Endothelial cell of umbilical vein (primary cell): ENCODE measurements at regions of chr6 and their contacts with region 1.

Region 1: DNA sequence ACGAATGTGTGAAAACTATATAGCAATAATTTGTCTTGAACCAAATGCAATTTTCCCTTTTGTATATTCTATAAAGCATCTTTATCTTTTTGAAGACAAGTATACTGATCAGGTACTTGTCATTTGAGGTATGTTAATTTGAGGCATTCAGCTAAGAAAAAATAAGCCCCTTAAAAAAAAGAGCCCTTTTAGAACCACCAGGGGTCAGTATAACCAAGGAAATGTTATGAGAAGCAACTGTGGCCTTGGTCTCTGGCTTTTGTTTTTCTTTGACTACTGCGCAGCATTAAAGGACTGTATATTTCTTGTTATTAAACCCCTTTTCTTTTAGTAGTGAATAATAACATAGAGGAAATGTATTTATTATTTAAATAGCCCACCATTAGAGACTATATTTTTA is 43.1 kb downstream of the CD109 start:
- DNase-seq: peak; percentile 79
- H3K4me3 ChIP-seq: no peak overlapping the region
- H3K27ac ChIP-seq: no peak overlapping the region
- H3K4me1 ChIP-seq: no peaks in the 10 kb centered on the region
- H3K27me3 ChIP-seq: no peaks in the 10 kb centered on the region
- CTCF ChIP-seq: peak; percentile 43 to 56
- POLR2A ChIP-seq: no peak

Region 2: DNA sequence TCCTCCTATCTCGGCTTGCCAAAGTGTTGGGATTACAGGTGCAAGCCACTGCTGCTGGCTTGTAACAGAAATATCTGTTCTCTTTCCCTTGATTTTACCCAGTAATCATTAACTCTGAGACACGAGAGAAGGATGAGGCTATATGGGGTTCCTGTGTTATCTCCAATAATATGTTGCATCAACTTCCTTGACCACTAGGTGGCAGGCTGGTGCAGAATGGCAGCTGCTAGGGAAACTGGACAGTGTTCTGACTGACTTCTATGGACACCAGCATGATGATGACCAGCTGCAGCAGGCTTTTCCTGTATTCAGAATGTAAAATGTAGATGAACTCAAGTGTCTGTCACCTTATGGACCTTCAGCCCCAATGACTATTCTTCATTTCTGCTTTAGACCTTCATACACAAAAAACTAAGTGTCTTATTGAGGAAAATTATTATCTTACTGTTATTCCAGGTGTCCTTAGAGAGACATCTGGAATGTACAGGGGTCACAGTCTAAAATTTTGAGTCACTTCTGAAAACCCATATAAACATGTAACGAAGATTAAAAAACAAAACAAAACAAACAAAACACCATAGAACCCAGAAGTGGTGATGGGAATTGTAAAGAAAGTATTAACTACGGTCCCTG is 63.5 kb before region 1 on chr6:
- CTCF ChIA-PET with region 1: interaction called, 343 read pairs
- POLR2A ChIA-PET with region 1: interaction called, 4 read pairs
- dilution Hi-C with region 1: no loop called
- intact Hi-C with region 1: no loop called
- DNase-seq: peak; percentile 85
- H3K4me3 ChIP-seq: no peak overlapping the region
- H3K27ac ChIP-seq: no peak overlapping the region
- H3K4me1 ChIP-seq: peaks cover 3% of the 10 kb centered on the region
- H3K27me3 ChIP-seq: no peaks in the 10 kb centered on the region
- CTCF ChIP-seq: peak; percentile 82 to 84
- POLR2A ChIP-seq: no peak

Region 3: DNA sequence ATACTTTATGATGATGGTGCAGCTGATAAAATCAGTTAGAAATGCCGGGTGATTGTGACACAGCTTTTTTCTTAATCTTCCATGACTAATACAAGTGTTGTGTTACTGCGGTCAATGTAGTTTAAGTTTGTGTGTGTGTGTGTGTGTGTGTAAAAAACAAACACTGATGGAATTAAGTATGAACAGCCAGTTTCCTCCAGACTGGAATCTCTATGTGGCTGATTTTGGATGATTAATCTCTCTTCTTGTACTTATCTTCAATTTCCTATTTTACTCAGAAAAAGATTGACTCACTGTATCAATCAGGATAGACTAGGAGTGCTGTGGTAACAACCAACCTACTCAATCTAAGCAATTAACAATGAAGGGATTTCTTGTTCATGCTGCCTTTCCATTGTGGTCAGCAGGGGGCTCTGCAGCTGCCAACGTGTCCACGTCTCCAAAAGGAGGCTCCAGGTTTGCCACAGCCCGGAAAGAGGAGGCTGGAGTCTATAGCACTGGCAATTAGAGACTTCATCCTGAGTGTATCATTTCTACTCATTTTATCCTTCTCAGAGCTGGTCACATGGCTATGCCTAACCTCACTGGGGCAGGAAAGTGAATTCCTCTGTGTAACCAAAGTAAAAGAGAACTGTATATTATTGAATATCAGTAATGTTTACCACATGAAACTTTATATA is 64.6 kb after region 1 on chr6:
- CTCF ChIA-PET with region 1: interaction called, 3 read pairs
- POLR2A ChIA-PET with region 1: no interaction called
- dilution Hi-C with region 1: no loop called
- intact Hi-C with region 1: loop called (anchors 5 kb)
- DNase-seq: peak; percentile 72
- H3K4me3 ChIP-seq: no peak overlapping the region
- H3K27ac ChIP-seq: peak overlapping the region; percentile 81
- H3K4me1 ChIP-seq: peaks cover 18% of the 10 kb centered on the region
- H3K27me3 ChIP-seq: no peaks in the 10 kb centered on the region
- CTCF ChIP-seq: peak; percentile 57 to 64
- POLR2A ChIP-seq: no peak

Region 4: DNA sequence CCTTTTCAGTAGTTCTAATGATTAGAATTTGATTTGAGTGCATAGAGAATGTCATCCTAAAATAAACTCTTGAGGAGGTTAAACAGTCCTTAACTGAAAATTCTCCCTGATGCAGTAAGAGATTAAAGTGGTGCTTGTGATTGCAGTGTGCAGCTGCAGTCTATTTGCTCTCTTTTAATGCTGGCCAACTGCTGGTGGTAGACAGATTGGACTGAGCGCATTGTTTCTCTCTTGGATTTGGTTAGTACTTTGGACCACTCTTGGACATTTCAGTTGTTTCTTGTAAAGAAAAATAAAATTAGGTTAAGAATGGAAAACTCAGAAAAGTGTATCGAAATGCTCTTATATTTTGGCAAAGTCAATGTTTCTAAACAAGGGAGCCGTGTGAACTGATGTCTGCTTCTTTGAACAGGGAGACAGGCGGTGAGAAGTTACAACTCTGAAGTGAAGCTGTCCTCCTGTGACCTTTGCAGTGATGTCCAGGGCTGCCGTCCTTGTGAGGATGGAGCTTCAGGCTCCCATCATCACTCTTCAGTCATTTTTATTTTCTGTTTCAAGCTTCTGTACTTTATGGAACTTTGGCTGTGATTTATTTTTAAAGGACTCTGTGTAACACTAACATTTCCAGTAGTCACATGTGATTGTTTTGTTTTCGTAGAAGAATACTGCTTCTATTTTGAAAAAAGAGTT is 84.1 kb after region 1 on chr6:
- CTCF ChIA-PET with region 1: no interaction called
- POLR2A ChIA-PET with region 1: no interaction called
- dilution Hi-C with region 1: no loop called
- intact Hi-C with region 1: no loop called
- DNase-seq: no peak
- H3K4me3 ChIP-seq: no peak overlapping the region
- H3K27ac ChIP-seq: no peak overlapping the region
- H3K4me1 ChIP-seq: no peaks in the 10 kb centered on the region
- H3K27me3 ChIP-seq: no peaks in the 10 kb centered on the region
- CTCF ChIP-seq: no peak
- POLR2A ChIP-seq: no peak

Region 5: GRCh38 chr6:73969971-73970970 is 231.2 kb after region 1 on chr6:
- CTCF ChIA-PET with region 1: interaction called, 6 read pairs
- POLR2A ChIA-PET with region 1: no interaction called
- dilution Hi-C with region 1: no loop called
- intact Hi-C with region 1: loop called (anchors 1 kb)
- DNase-seq: peak; percentile 56
- H3K4me3 ChIP-seq: no peak overlapping the region
- H3K27ac ChIP-seq: no peak overlapping the region
- H3K4me1 ChIP-seq: peaks cover 8% of the 10 kb centered on the region
- H3K27me3 ChIP-seq: peaks cover 3 to 4% of the 10 kb centered on the region in 2 experiments
- CTCF ChIP-seq: peak; percentile 48 to 53
- POLR2A ChIP-seq: no peak

Region 6: DNA sequence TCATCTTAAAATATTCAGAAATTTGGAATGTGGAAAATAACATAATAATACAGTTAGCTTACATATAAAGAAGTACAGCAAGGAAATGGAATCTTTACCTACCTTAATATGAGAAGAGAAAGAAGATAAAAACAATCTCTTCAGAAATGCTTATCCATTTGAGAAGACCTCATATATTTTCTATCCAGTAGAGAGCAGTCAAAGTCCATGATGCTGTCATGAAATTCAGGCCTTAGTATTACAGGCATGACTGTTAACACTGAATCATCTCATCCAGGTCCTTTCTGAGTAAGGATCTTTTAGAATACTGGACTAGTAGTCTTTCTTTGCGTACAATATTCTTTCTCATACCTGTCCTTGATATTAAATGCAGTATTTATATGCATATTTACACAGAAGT is 670.4 kb after region 1 on chr6:
- CTCF ChIA-PET with region 1: interaction called, 16 read pairs
- POLR2A ChIA-PET with region 1: no interaction called
- dilution Hi-C with region 1: no loop called
- intact Hi-C with region 1: loop called (anchors 5 kb)
- DNase-seq: peak; percentile 77
- H3K4me3 ChIP-seq: no peak overlapping the region
- H3K27ac ChIP-seq: no peak overlapping the region
- H3K4me1 ChIP-seq: no peaks in the 10 kb centered on the region
- H3K27me3 ChIP-seq: no peaks in the 10 kb centered on the region
- CTCF ChIP-seq: peak; percentile 14 to 23
- POLR2A ChIP-seq: no peak